Mucosa of descending colon (tissue), 3 donors: ENCODE measurements at regions of chr9 and their contacts with region 1.

Region 1: DNA sequence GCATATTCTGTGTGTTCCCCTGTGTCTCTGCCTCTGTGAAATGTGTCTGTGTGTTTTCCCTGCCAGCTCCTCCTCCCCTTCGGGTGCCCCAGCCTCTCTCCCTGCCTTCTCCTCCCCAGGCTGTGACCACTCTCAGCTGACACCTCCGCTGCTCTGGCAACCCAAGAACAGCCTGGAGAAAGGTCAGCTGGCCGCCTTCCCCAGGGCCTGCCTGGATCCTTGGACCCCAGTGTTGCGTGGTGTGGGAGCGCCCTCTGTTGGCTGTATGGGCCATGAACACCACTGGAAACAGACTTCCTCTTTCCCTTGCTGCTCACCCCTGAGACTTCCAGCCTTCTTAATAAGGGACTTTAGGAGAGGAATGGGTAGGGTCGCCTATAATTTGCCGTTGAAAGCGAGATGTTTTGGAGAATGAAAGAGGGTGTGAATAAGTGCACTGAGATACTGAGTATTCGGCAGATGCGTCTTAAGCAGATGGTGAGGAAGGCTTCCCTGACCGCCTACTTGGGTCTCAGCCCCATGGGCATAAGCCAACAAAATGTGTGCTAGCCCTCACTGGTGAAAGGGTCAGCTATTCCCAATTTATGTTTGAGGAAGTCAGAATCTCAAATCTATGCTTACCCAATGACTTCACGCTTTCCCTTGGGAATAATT is 114.9 kb upstream of the TRIM32 start:
- DNase-seq: peak; percentile 84 to 86 (median 84)
- ATAC-seq: peak; percentile 87
- H3K4me3 ChIP-seq: no peak overlapping the region
- H3K4me1 ChIP-seq: peaks cover 15% of the 10 kb centered on the region
- CTCF ChIP-seq: peak; percentile 39

Region 2: DNA sequence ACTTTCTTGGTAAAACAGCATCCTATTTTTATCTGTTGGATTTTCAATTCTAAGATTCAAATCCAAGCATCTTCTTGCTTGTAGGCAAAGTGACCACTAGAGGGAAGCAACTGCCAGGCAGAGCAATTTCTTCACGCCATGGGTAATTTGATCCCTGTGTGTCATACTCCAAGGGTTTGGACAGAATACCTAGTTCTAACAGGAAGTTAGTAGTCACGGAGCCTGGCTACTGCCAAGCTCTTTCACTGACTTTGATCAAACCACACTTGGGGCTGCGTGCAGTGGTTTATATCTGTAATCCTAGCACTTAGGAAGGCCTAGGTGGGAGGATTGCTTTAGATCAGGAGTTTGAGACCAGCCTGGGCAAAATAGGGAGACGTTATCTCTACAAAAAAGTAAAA is 980.6 kb before region 1 on chr9:
- intact Hi-C with region 1: loop called (anchors 5 to 10 kb)
- DNase-seq: no peak
- ATAC-seq: peak; percentile 99
- H3K4me3 ChIP-seq: no peak overlapping the region
- H3K4me1 ChIP-seq: no peaks in the 10 kb centered on the region
- CTCF ChIP-seq: peak; percentile 38

Region 3: GRCh38 chr9:116163293-116164055 is 408.7 kb before region 1 on chr9:
- intact Hi-C with region 1: loop called in 1 of 2 experiments (anchors 10 kb)
- DNase-seq: peak in 1 of 3 donors; percentile 13
- ATAC-seq: no peak
- H3K4me3 ChIP-seq: no peak overlapping the region
- H3K4me1 ChIP-seq: no peaks in the 10 kb centered on the region
- CTCF ChIP-seq: no peak

Region 4: GRCh38 chr9:116616304-116616914 is 44.2 kb after region 1 on chr9:
- intact Hi-C with region 1: no loop called
- DNase-seq: peak in 1 of 3 donors; percentile 18
- ATAC-seq: peak; percentile 79
- H3K4me3 ChIP-seq: no peak overlapping the region
- H3K4me1 ChIP-seq: no peaks in the 10 kb centered on the region
- CTCF ChIP-seq: no peak

Region 5: GRCh38 chr9:116687074-116687753 is 115.0 kb after region 1 on chr9 and contains the start of gene TRIM32:
- intact Hi-C with region 1: no loop called
- DNase-seq: peak; percentile 93 to 96 (median 94)
- ATAC-seq: peak; percentile 98
- H3K4me3 ChIP-seq: peak within 1 kb of the TSS; percentile 48
- H3K4me1 ChIP-seq: peaks cover 32% of the 10 kb centered on the region
- CTCF ChIP-seq: no peak
- total RNA-seq, gene TRIM32: 11.8 to 21.5 (median 20.0) TPM

Region 6: GRCh38 chr9:116891424-116891823 is 319.2 kb after region 1 on chr9:
- intact Hi-C with region 1: no loop called
- DNase-seq: no peak
- ATAC-seq: no peak
- H3K4me3 ChIP-seq: no peak overlapping the region
- H3K4me1 ChIP-seq: no peaks in the 10 kb centered on the region
- CTCF ChIP-seq: no peak